MCF 10A (cell line): ENCODE measurements at regions of chr12 and their contacts with region 1.

Region 1: DNA sequence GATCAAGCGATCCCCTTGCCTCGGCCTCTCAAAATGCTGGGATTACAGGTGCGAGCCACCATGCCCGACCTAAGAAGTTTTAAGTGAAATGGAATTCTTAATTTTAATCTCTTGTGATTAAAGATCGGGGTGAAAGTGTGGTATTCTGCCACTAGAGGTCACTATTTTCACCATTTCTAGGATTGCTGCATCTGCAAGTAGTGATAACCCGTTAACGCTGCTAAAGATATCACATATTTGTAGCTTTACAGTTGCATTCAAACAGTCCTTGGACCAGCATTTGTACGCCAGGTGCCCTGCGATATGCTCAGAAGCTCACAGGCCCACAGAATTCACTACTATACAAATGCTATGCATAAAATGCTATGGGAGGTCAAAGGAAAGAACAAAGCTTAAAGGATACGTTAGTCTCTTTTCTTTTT is 19.3 kb downstream of the CCDC62 start:
- DNase-seq: peak; percentile 64
- H3K4me3 Mint-ChIP-seq: no peak overlapping the region
- H3K27ac Mint-ChIP-seq: no peak overlapping the region
- H3K4me1 Mint-ChIP-seq: peaks cover 8% of the 10 kb centered on the region
- H3K27me3 Mint-ChIP-seq: no peaks in the 10 kb centered on the region
- CTCF ChIP-seq: peak; percentile 46

Region 2: GRCh38 chr12:122819209-122819785 is 25.6 kb after region 1 on chr12:
- CTCF ChIA-PET with region 1: interaction called, 10 read pairs
- POLR2A ChIA-PET with region 1: no interaction called
- intact Hi-C with region 1: no loop called
- DNase-seq: no peak
- H3K4me3 Mint-ChIP-seq: no peak overlapping the region
- H3K27ac Mint-ChIP-seq: no peak overlapping the region
- H3K4me1 Mint-ChIP-seq: no peaks in the 10 kb centered on the region
- H3K27me3 Mint-ChIP-seq: no peaks in the 10 kb centered on the region
- CTCF ChIP-seq: no peak

Region 3: GRCh38 chr12:122834104-122834920 is 40.6 kb after region 1 on chr12:
- CTCF ChIA-PET with region 1: interaction called, 18 read pairs
- POLR2A ChIA-PET with region 1: interaction called, 11 read pairs
- intact Hi-C with region 1: loop called (anchors 1 kb)
- DNase-seq: peak; percentile 56
- H3K4me3 Mint-ChIP-seq: peak overlapping the region; percentile 75
- H3K27ac Mint-ChIP-seq: no peak overlapping the region
- H3K4me1 Mint-ChIP-seq: peaks cover 32% of the 10 kb centered on the region
- H3K27me3 Mint-ChIP-seq: no peaks in the 10 kb centered on the region
- CTCF ChIP-seq: no peak

Region 4: DNA sequence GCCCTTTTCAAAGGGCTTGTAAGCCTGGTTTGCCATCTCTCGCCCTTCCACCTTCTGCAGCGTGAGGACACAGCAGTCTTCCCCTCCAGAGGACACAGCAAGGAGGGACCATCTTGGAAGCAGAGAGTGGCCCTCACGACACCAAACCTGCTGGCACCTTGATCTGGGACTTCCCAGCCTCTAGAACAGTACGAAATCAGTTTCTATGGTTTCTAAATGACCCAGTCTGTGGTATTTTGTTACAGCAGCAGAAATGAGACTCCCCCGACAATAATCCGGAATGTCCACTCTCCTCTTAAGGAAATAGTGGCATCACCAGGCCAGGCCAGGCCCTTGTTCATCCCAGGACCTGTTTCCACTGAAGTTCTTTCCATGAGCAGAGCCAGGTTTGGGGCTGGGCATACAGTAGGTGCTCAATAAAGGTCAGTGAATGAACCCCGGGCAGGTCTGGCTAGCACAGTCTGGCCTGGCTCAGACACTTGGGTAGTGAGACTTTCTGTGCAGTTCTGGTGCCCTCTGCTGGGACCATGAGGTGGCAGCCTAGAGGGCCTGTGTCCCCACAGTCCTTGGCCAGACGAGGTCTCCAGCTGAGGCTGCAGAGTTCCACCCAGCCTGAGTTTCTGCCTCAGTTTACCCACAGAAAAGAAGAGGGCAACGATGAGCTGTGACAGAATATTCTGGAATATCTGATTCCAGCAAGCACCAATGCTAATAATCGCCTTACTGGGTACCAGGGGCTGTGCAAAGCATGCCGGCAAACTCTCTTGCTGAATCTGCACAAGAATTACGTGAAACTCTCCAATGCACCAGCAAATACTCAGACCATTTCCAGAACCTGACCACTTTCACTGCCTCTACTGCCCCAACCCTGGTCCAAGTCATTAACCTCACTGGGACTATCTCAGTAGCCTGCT is 158.5 kb after region 1 on chr12:
- CTCF ChIA-PET with region 1: interaction called, 37 read pairs
- POLR2A ChIA-PET with region 1: interaction called, 5 read pairs
- intact Hi-C with region 1: loop called (anchors 1 kb)
- DNase-seq: peak; percentile 81
- H3K4me3 Mint-ChIP-seq: no peak overlapping the region
- H3K27ac Mint-ChIP-seq: no peak overlapping the region
- H3K4me1 Mint-ChIP-seq: peaks cover 8% of the 10 kb centered on the region
- H3K27me3 Mint-ChIP-seq: no peaks in the 10 kb centered on the region
- CTCF ChIP-seq: peak; percentile 87